ENCODE measurements at regions of chr12 and their contacts with region 1.

Region 1: DNA sequence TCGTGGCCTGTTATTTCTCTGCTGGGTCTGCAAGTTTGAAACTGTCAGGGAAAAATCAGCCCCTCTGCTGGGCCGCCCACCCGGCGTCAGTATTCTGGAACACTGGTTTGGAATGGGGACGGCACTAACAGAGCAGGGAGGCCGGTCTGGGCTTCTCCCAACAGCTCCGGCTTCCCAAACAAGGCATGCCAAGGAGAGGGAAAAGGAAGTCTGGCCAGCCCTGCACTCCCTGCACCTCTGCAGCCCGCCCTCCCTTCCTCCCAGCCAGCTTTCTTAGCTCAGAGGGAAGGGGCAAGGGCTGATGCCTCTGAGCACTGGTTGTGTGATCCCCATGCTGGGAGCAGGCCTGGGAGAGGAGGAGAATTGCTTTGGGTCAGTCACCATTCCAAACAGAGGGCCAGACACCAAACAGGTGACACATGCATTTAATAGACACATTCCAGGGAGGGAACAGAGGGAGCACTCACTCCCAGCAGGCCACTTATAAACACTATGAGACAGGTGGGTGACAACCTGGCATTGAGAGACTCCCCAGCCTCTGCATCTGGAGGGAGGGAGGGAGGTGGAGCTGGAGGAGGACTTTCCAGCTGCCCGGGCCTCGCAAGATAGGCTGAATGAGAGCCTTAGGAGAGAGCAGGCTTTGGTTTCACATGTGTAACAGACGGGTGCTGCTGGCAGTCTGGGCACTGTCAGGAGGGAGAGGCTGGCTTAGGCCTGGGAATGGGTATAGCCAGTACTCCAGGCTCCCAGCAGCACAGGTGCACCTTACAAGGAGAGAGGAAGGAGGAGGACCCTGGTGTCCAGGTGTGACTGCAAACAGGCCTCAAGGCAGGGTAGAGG is 10.3 kb downstream of the KRT75 start:
- DNase-seq: peak; percentile 69
- H3K4me3 ChIP-seq: no peak overlapping the region
- H3K27ac ChIP-seq: peak overlapping the region; percentile 55 to 83 (median 79)
- H3K4me1 ChIP-seq: peaks cover 0 to 57% (median 31%) of the 10 kb centered on the region in 4 donors
- H3K27me3 ChIP-seq: no peaks in the 10 kb centered on the region
- CTCF ChIP-seq: no peak
- EP300 ChIP-seq: peak in 1 of 4 donors; percentile 30
- POLR2A ChIP-seq: no peak

Region 2: GRCh38 chr12:52407918-52408317 is 16.0 kb before region 1 on chr12:
- intact Hi-C with region 1: no loop called
- DNase-seq: no peak
- H3K4me3 ChIP-seq: no peak overlapping the region
- H3K27ac ChIP-seq: no peak overlapping the region
- H3K4me1 ChIP-seq: peaks cover 0 to 13% (median 4%) of the 10 kb centered on the region in 4 donors
- H3K27me3 ChIP-seq: no peaks in the 10 kb centered on the region
- CTCF ChIP-seq: no peak
- EP300 ChIP-seq: no peak
- POLR2A ChIP-seq: no peak

Region 3: DNA sequence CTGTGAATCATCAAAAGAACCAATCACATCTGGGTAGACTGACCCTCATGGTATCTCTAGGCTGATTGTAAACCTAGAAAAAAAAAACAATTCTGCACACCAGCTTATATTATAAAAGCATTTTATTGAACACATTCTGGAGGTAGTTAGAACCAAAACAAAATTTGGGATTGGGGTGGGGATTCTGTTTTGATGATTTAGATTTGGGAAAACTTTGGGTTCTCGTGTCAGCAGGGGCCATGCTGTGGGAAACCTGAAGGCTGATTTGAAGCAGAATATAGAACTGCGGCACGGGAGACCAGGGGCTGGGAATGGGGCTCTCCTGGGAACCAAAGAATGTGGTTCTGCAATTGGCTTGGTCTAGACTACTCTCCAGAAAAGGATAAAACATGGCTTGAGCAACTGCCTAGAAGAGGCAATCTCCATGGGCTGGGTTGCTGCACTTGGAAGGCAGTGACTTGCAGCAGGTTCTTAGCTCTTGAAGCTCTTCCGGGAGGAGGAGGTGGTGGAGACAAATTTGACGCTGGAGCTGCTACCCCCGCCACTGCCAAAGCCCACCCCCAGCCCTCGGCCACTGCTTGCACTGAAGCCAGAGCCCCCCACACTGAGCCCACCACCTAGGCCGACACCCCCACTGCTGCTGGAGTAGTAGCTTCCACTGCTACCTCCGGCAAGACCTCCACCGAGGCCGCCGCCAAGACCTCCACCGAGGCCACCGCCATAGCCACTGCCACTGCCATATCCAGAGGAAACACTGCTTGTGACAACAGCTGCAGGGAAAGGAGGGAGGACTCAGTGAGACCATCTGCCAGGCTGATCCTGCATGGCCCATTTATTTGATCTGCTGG is 90.8 kb after region 1 on chr12:
- intact Hi-C with region 1: loop called (anchors 5 kb)
- DNase-seq: no peak
- H3K4me3 ChIP-seq: no peak overlapping the region
- H3K27ac ChIP-seq: peak overlapping the region in 1 of 4 donors; percentile 60
- H3K4me1 ChIP-seq: peaks cover 0 to 35% (median 15%) of the 10 kb centered on the region in 4 donors
- H3K27me3 ChIP-seq: peaks cover 0 to 3% (median 0%) of the 10 kb centered on the region in 3 donors
- CTCF ChIP-seq: no peak
- EP300 ChIP-seq: no peak
- POLR2A ChIP-seq: no peak